ENCODE measurements at regions of chrX and their contacts with region 1.

Region 1: DNA sequence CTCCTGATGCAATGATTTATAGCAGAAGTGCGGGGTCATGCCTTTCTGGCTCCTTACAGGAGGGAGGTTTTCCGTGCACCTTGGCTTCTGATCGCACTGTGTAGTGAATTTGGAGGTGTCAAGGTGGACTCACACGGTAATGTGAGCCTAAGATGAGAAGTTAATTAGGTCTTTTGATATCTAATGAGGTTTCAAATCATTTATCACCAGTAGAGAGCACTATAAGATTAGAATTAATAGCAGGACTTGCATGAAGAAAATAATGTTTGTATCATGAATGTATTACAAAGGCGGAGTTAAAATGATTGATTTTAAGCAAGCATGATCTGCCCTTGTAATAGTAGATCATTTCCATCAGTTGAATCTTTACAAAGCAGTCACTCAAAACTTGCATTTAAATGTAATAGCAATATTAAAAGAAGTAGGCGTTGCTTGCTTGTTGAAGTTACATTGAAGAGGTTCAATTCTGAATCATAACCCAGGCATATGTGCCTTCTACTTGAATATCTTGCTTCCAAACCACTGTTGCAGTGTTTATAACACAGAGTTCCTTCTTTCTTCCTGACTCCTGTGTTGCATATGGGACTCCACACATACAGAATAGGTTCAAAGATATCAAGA is 152.1 kb downstream of the FMR1NB start:
- DNase-seq: peak; percentile 42
- ATAC-seq: no peak
- H3K4me3 ChIP-seq: no peak overlapping the region
- H3K4me3 Mint-ChIP-seq: no peak overlapping the region
- H3K27ac ChIP-seq: no peak overlapping the region
- H3K27ac Mint-ChIP-seq: no peak overlapping the region
- H3K4me1 ChIP-seq: no peaks in the 10 kb centered on the region
- H3K4me1 Mint-ChIP-seq: no peaks in the 10 kb centered on the region
- H3K27me3 ChIP-seq: no peaks in the 10 kb centered on the region
- H3K27me3 Mint-ChIP-seq: peaks cover 5% of the 10 kb centered on the region
- CTCF ChIP-seq: peak; percentile 59

Region 2: GRCh38 chrX:148223361-148223760 is 90.1 kb after region 1 on chrX:
- CTCF ChIA-PET with region 1: no interaction called
- POLR2A ChIA-PET with region 1: no interaction called
- intact Hi-C with region 1: no loop called
- DNase-seq: no peak
- ATAC-seq: no peak
- H3K4me3 ChIP-seq: no peak overlapping the region
- H3K4me3 Mint-ChIP-seq: no peak overlapping the region
- H3K27ac ChIP-seq: no peak overlapping the region
- H3K27ac Mint-ChIP-seq: no peak overlapping the region
- H3K4me1 ChIP-seq: no peaks in the 10 kb centered on the region
- H3K4me1 Mint-ChIP-seq: no peaks in the 10 kb centered on the region
- H3K27me3 ChIP-seq: no peaks in the 10 kb centered on the region
- H3K27me3 Mint-ChIP-seq: no peaks in the 10 kb centered on the region
- CTCF ChIP-seq: no peak

Region 3: DNA sequence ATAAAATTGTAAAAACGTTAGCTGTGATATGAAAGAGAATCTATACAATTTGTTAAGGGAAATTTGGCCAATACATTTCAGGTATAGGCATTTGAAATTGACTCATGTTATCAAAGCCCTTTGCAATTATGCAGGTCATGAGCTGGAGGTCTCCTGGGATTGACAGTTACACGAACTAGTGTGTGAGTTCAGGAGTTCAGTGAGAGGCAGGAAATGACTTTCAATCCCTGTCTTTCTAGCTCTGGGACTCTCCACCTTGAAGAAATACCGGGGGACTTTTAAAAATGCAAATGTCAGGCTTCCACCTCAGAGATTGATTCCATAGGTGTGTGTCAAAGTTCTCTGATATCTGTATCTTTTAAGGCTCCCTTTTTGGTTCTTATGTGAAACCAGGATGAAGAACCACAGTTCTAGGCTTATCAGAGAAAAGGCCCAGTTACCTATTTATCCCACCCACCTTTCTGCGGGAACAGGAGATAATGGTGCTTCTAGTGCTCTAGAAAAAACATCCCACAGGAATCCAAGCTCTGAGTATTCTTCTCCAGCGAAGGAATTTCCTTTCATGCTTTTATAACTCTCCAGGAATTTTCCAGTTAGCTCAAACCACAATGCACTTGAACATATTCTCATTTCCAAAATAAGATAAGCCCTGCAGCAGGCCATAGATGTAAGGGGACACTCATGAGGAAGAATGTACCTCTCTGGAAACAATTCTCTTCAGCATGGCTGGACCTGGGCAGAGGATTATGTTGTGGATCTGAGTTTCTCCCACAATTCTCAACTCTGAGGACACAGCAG is 870.8 kb after region 1 on chrX:
- CTCF ChIA-PET with region 1: no interaction called
- POLR2A ChIA-PET with region 1: no interaction called
- intact Hi-C with region 1: loop called (anchors 10 kb)
- DNase-seq: no peak
- ATAC-seq: no peak
- H3K4me3 ChIP-seq: no peak overlapping the region
- H3K4me3 Mint-ChIP-seq: no peak overlapping the region
- H3K27ac ChIP-seq: no peak overlapping the region
- H3K27ac Mint-ChIP-seq: no peak overlapping the region
- H3K4me1 ChIP-seq: no peaks in the 10 kb centered on the region
- H3K4me1 Mint-ChIP-seq: no peaks in the 10 kb centered on the region
- H3K27me3 ChIP-seq: no peaks in the 10 kb centered on the region
- H3K27me3 Mint-ChIP-seq: no peaks in the 10 kb centered on the region
- CTCF ChIP-seq: no peak

Region 4: GRCh38 chrX:149286940-149287349 is 1153.7 kb after region 1 on chrX:
- CTCF ChIA-PET with region 1: interaction called, 38 read pairs
- POLR2A ChIA-PET with region 1: no interaction called
- intact Hi-C with region 1: no loop called
- DNase-seq: peak; percentile 56
- ATAC-seq: no peak
- H3K4me3 ChIP-seq: no peak overlapping the region
- H3K4me3 Mint-ChIP-seq: no peak overlapping the region
- H3K27ac ChIP-seq: no peak overlapping the region
- H3K27ac Mint-ChIP-seq: no peak overlapping the region
- H3K4me1 ChIP-seq: no peaks in the 10 kb centered on the region
- H3K4me1 Mint-ChIP-seq: no peaks in the 10 kb centered on the region
- H3K27me3 ChIP-seq: no peaks in the 10 kb centered on the region
- H3K27me3 Mint-ChIP-seq: no peaks in the 10 kb centered on the region
- CTCF ChIP-seq: peak; percentile 60

Region 5: DNA sequence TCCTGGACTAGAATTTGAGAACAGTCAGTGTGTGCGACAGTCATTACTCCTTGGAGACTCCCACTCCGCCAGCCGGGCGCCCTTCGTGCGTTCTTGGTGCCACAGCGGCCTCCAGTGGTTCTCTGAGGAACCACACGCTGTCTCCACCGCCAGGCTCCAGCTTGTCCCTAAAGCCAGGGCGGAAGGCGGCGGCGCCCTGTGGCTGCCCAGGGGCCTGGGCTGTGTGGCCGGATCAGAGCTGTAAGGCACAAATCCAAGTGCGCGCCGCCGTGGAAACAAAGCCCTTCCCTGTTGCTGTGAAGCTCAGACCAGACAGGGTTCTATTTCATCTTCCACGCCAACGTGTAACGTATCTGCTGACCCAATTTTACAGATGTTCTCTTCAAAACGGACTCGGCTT is 1337.7 kb after region 1 on chrX:
- CTCF ChIA-PET with region 1: interaction called, 7 read pairs
- POLR2A ChIA-PET with region 1: no interaction called
- intact Hi-C with region 1: loop called (anchors 1 kb)
- DNase-seq: peak; percentile 63
- ATAC-seq: peak; percentile 76
- H3K4me3 ChIP-seq: no peak overlapping the region
- H3K4me3 Mint-ChIP-seq: no peak overlapping the region
- H3K27ac ChIP-seq: no peak overlapping the region
- H3K27ac Mint-ChIP-seq: no peak overlapping the region
- H3K4me1 ChIP-seq: no peaks in the 10 kb centered on the region
- H3K4me1 Mint-ChIP-seq: no peaks in the 10 kb centered on the region
- H3K27me3 ChIP-seq: no peaks in the 10 kb centered on the region
- H3K27me3 Mint-ChIP-seq: no peaks in the 10 kb centered on the region
- CTCF ChIP-seq: peak; percentile 77

Measured in B cell (primary cell).